MCF 10A (cell line): ENCODE measurements at regions of chr11 and their contacts with region 1.

Region 1: GRCh38 chr11:8964324-8965320 is at the start of gene TMEM9B:
- DNase-seq: peak; percentile 92
- H3K4me3 Mint-ChIP-seq: peak within 1 kb of the TSS; percentile 85
- H3K27ac Mint-ChIP-seq: peak within 1 kb of the TSS; percentile 72
- H3K4me1 Mint-ChIP-seq: peaks cover 20% of the 10 kb centered on the region
- H3K27me3 Mint-ChIP-seq: no peaks in the 10 kb centered on the region
- CTCF ChIP-seq: no peak
- total RNA-seq, gene TMEM9B: 30.0 and 35.3 TPM in 2 replicates

Region 2: GRCh38 chr11:8225589-8226036 is 739.0 kb before region 1 on chr11:
- CTCF ChIA-PET with region 1: interaction called, 4 read pairs
- POLR2A ChIA-PET with region 1: interaction called, 3 read pairs
- intact Hi-C with region 1: loop called (anchors 10 kb)
- DNase-seq: peak; percentile 63
- H3K4me3 Mint-ChIP-seq: no peak overlapping the region
- H3K27ac Mint-ChIP-seq: no peak overlapping the region
- H3K4me1 Mint-ChIP-seq: peaks cover 20% of the 10 kb centered on the region
- H3K27me3 Mint-ChIP-seq: no peaks in the 10 kb centered on the region
- CTCF ChIP-seq: peak; percentile 94

Region 3: DNA sequence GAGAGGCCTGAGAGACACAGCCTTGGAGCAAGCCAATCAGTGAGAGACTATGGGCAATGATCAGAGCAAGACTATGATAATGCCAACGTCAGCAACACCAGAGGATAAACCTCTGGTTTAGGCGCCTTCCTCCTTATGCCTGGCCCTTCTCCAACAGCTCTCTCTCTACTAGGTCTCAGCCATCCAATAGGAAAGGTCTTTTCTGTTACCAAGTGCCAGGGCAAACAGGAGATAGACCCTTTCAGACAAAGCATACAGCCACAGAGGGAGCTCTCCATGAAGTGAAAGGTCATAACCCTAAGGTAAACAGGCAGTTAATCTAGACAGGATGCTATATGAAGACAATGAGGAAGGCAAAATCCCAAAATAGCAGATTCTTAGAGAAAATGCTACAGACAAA is 380.1 kb before region 1 on chr11:
- CTCF ChIA-PET with region 1: no interaction called
- POLR2A ChIA-PET with region 1: no interaction called
- intact Hi-C with region 1: no loop called
- DNase-seq: no peak
- H3K4me3 Mint-ChIP-seq: no peak overlapping the region
- H3K27ac Mint-ChIP-seq: no peak overlapping the region
- H3K4me1 Mint-ChIP-seq: peaks cover 10% of the 10 kb centered on the region
- H3K27me3 Mint-ChIP-seq: no peaks in the 10 kb centered on the region
- CTCF ChIP-seq: no peak

Region 4: GRCh38 chr11:8682303-8683114 is 282.1 kb before region 1 on chr11 and contains the starts of genes RPL27A and TRIM66:
- CTCF ChIA-PET with region 1: interaction called, 12 read pairs
- POLR2A ChIA-PET with region 1: interaction called, 30 read pairs
- intact Hi-C with region 1: no loop called
- DNase-seq: peak; percentile 97
- H3K4me3 Mint-ChIP-seq: peak within 1 kb of the TSS; percentile 81
- H3K27ac Mint-ChIP-seq: peak within 1 kb of the TSS; percentile 98
- H3K4me1 Mint-ChIP-seq: peaks cover 34% of the 10 kb centered on the region
- H3K27me3 Mint-ChIP-seq: no peaks in the 10 kb centered on the region
- CTCF ChIP-seq: no peak
- total RNA-seq, gene RPL27A: 1,377 TPM in 2 replicates
- total RNA-seq, gene TRIM66: 27.3 and 27.4 TPM in 2 replicates

Region 5: GRCh38 chr11:8813658-8814057 is 151.0 kb before region 1 on chr11:
- CTCF ChIA-PET with region 1: interaction called, 15 read pairs
- POLR2A ChIA-PET with region 1: interaction called, 25 read pairs
- intact Hi-C with region 1: loop called (anchors 1 kb)
- DNase-seq: peak; percentile 91
- H3K4me3 Mint-ChIP-seq: no peak overlapping the region
- H3K27ac Mint-ChIP-seq: no peak overlapping the region
- H3K4me1 Mint-ChIP-seq: peaks cover 10% of the 10 kb centered on the region
- H3K27me3 Mint-ChIP-seq: no peaks in the 10 kb centered on the region
- CTCF ChIP-seq: peak; percentile 67

Region 6: GRCh38 chr11:8911029-8911826 is 53.4 kb before region 1 on chr11 and contains the start of gene AKIP1:
- CTCF ChIA-PET with region 1: interaction called, 155 read pairs
- POLR2A ChIA-PET with region 1: interaction called, 29 read pairs
- intact Hi-C with region 1: loop called (anchors 1 kb)
- DNase-seq: peak; percentile 94
- H3K4me3 Mint-ChIP-seq: peak within 1 kb of the TSS; percentile 84
- H3K27ac Mint-ChIP-seq: peak within 1 kb of the TSS; percentile 33
- H3K4me1 Mint-ChIP-seq: peaks cover 34% of the 10 kb centered on the region
- H3K27me3 Mint-ChIP-seq: no peaks in the 10 kb centered on the region
- CTCF ChIP-seq: no peak
- total RNA-seq, gene AKIP1: 64.6 and 67.6 TPM in 2 replicates

Region 7: GRCh38 chr11:8948886-8949285 is 15.7 kb before region 1 on chr11:
- CTCF ChIA-PET with region 1: interaction called, 45 read pairs
- POLR2A ChIA-PET with region 1: interaction called, 4 read pairs
- intact Hi-C with region 1: no loop called
- DNase-seq: no peak
- H3K4me3 Mint-ChIP-seq: no peak overlapping the region
- H3K27ac Mint-ChIP-seq: no peak overlapping the region
- H3K4me1 Mint-ChIP-seq: no peaks in the 10 kb centered on the region
- H3K27me3 Mint-ChIP-seq: no peaks in the 10 kb centered on the region
- CTCF ChIP-seq: no peak

Region 8: GRCh38 chr11:9030601-9031000 is 66.0 kb after region 1 on chr11:
- CTCF ChIA-PET with region 1: no interaction called
- POLR2A ChIA-PET with region 1: no interaction called
- intact Hi-C with region 1: no loop called
- DNase-seq: no peak
- H3K4me3 Mint-ChIP-seq: no peak overlapping the region
- H3K27ac Mint-ChIP-seq: no peak overlapping the region
- H3K4me1 Mint-ChIP-seq: no peaks in the 10 kb centered on the region
- H3K27me3 Mint-ChIP-seq: no peaks in the 10 kb centered on the region
- CTCF ChIP-seq: no peak

Region 9: GRCh38 chr11:9479899-9480298 is 515.3 kb after region 1 on chr11:
- CTCF ChIA-PET with region 1: no interaction called
- POLR2A ChIA-PET with region 1: no interaction called
- intact Hi-C with region 1: no loop called
- DNase-seq: no peak
- H3K4me3 Mint-ChIP-seq: no peak overlapping the region
- H3K27ac Mint-ChIP-seq: no peak overlapping the region
- H3K4me1 Mint-ChIP-seq: no peaks in the 10 kb centered on the region
- H3K27me3 Mint-ChIP-seq: no peaks in the 10 kb centered on the region
- CTCF ChIP-seq: no peak

Region 10: GRCh38 chr11:9506489-9507276 is 542.1 kb after region 1 on chr11:
- CTCF ChIA-PET with region 1: no interaction called
- POLR2A ChIA-PET with region 1: no interaction called
- intact Hi-C with region 1: loop called (anchors 1 kb)
- DNase-seq: peak; percentile 82
- H3K4me3 Mint-ChIP-seq: no peak overlapping the region
- H3K27ac Mint-ChIP-seq: peak overlapping the region; percentile 16
- H3K4me1 Mint-ChIP-seq: peaks cover 17% of the 10 kb centered on the region
- H3K27me3 Mint-ChIP-seq: no peaks in the 10 kb centered on the region
- CTCF ChIP-seq: peak; percentile 74